Thyroid gland (tissue), 4 donors: ENCODE measurements at regions of chr2 and their contacts with region 1.

Region 1: DNA sequence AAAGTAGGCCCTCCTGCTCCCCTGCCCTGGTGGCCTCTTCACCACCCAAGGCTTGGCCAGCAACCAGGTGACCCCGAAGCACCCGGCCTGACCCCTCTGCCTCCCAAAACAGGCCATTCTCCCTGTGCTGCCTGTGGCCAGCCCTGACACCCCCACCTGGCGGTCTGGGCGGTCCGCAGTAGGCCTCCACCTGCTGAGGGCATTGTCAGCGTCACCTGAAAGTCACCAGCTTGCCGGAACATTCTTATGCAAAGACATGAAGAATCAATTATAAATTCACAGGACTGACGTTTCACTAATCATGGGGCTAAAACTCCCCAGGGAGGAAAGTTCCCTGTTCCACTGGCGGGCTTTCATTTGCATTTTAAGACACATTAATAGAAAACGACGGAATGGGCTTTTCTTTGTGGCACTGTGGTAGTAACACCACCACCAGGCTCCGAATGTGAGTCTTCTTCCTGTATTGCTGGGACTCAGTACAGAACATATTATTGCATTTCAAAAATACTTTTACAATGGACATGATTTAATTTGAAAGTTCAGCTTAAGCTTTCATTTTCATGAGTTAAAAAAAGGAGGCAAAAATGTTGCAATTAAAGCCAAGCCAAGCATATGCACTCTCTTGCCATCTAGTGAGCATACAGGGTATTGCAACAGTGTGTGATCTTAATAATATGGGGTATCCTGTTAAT is 57.4 kb downstream of the ADI1 start:
- DNase-seq: no peak
- H3K4me3 ChIP-seq: no peak overlapping the region
- H3K27ac ChIP-seq: peak overlapping the region; percentile 29 to 88 (median 86)
- H3K4me1 ChIP-seq: peaks cover 30 to 41% of the 10 kb centered on the region in 2 donors
- H3K27me3 ChIP-seq: no peaks in the 10 kb centered on the region
- CTCF ChIP-seq: peak; percentile 79 to 97 (median 92)
- POLR2A ChIP-seq: no peak

Region 2: GRCh38 chr2:3180082-3180908 is 281.7 kb before region 1 on chr2:
- intact Hi-C with region 1: loop called (anchors 10 kb)
- DNase-seq: no peak
- H3K4me3 ChIP-seq: no peak overlapping the region
- H3K27ac ChIP-seq: no peak overlapping the region
- H3K4me1 ChIP-seq: peaks cover 3 to 10% of the 10 kb centered on the region in 2 donors
- H3K27me3 ChIP-seq: no peaks in the 10 kb centered on the region
- CTCF ChIP-seq: no peak
- POLR2A ChIP-seq: no peak

Region 3: DNA sequence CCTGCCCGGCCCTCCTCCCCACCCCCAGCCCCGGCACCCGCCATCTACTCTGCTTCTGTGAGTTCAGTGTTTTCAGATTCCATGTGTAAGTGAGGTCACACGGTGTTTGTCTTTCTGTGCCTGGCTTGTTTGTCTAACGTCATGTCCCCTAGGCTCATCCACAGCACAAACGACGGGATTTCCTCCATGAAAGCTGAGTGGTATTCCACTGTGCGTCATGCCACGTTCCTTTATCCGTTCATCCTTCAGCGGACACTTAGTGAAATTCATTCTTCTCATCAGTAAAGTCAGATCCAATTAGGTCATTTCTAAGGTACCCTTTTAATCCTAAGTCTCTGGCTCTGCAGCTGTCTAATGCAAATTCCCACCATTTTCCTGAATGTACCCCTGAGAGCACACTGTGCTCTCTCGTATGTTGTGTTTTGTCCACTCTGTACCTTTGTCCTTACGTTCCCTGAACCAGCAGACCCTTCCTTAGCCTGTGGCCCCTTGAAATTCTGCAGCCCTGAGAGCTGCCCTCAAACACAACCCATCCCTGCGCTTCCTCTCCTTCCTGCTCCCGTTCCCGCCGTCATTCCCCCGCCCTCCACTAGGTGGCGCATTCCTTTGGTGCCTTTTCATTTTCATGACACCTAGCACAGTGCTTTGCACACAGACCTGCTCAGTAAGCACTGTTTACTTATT is 38.3 kb before region 1 on chr2:
- intact Hi-C with region 1: loop called (anchors 5 kb)
- DNase-seq: peak; percentile 69 to 77
- H3K4me3 ChIP-seq: no peak overlapping the region
- H3K27ac ChIP-seq: peak overlapping the region in 1 of 3 donors; percentile 11
- H3K4me1 ChIP-seq: no peaks in the 10 kb centered on the region
- H3K27me3 ChIP-seq: no peaks in the 10 kb centered on the region
- CTCF ChIP-seq: peak; percentile 88 to 99 (median 96)
- POLR2A ChIP-seq: no peak

Region 4: GRCh38 chr2:3563521-3563976 is 101.6 kb after region 1 on chr2:
- intact Hi-C with region 1: no loop called
- DNase-seq: no peak
- H3K4me3 ChIP-seq: no peak overlapping the region
- H3K27ac ChIP-seq: no peak overlapping the region
- H3K4me1 ChIP-seq: peaks cover 7 to 8% of the 10 kb centered on the region in 2 donors
- H3K27me3 ChIP-seq: no peaks in the 10 kb centered on the region
- CTCF ChIP-seq: no peak
- POLR2A ChIP-seq: no peak

Region 5: GRCh38 chr2:3604991-3605961 is 143.3 kb after region 1 on chr2:
- intact Hi-C with region 1: no loop called
- DNase-seq: peak in 1 of 2 donors; percentile 16
- H3K4me3 ChIP-seq: no peak overlapping the region
- H3K27ac ChIP-seq: peak overlapping the region in 1 of 3 donors; percentile 43
- H3K4me1 ChIP-seq: no peaks in the 10 kb centered on the region
- H3K27me3 ChIP-seq: no peaks in the 10 kb centered on the region
- CTCF ChIP-seq: no peak
- POLR2A ChIP-seq: no peak